AG04449 (cell line): ENCODE measurements at regions of chr7 and their contacts with region 1.

Region 1: DNA sequence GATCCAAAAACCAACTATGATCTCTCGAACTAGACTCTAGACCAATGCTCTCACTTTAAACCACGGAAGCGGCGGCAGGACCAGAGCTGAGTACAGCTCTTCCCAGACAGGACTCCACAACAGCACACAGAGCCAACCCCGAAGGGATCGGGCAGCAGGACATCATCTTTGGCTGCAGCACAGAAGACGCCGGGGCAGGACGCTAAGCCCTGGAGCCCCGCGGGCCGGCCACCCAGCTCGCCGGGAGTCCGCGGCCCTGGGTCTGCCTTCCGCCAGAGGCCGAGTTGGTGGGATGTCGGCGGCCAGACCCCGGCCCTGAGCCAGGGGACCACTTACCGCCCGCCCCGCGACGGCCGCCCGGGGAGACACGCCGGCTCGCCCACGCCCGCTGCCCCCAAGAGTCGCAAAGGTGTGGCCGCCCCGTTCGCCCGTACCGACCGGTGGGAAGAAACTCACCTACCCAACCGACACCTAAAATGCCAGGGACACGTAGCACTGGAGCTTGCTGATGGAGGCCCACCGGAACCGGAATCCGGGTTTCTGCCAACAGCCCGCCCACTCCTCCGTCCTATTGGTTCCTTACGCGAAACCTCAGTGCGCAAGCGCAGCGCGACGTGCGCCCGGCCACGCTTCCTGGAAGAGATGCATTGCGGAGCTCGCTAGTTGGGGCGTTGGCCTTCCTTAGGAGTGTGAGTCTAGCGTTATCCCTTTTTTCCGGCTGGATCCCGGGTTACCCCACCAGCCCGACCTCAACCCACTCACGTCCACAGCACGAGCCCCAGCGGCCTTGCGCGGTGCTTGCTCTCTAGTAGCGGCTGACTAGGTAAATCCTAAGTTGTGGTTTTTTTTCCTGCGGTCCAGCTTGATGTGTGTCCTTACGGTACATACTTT is at the start of gene SEC61G:
- DNase-seq: peak; percentile 87
- H3K4me3 ChIP-seq: peak within 1 kb of the TSS; percentile 86
- CTCF ChIP-seq: no peak

Region 2: DNA sequence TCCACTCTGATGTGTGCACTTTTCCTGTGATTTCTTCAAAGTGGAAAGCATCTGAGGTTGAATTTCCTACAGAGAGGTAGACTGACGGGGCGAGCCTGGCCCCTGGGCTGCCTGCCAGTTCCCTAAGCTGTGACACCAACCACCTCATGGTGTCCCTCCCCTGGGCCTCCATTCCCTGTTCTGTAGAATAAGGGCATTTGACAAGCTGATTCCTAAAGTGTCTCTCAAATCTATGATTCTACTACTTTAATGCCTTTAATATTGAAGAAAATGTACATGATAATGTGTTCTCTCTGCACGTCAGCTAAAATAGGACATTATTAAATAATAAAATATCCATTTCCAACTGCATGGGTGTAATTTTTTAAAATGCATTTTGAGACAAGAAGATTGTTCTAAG is 105.0 kb before region 1 on chr7:
- CTCF ChIA-PET with region 1: no interaction called
- POLR2A ChIA-PET with region 1: no interaction called
- DNase-seq: no peak
- H3K4me3 ChIP-seq: no peak overlapping the region
- CTCF ChIP-seq: no peak

Region 3: GRCh38 chr7:54747234-54747633 is 11.7 kb before region 1 on chr7:
- CTCF ChIA-PET with region 1: no interaction called
- POLR2A ChIA-PET with region 1: interaction called, 10 read pairs
- DNase-seq: no peak
- H3K4me3 ChIP-seq: no peak overlapping the region
- CTCF ChIP-seq: no peak

Region 4: DNA sequence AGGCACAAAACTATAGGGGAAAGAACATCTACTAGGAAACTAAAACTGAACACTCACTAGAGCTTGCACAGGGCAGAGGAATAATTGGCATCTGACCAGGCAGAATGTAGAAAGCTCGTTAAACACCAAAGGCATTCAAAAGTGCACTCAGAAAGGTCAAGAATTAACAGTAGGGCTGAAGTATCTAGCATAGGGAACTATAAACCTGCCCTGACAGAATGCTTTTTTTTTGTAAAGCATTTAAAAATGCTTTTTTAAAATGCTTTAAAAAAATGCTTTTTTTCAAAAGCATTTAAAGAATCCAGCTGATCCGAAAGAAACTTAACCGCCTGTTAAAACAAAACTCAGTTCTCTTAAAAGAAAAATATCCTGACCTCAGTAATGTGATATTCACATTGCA is 185.2 kb after region 1 on chr7:
- CTCF ChIA-PET with region 1: no interaction called
- POLR2A ChIA-PET with region 1: no interaction called
- DNase-seq: no peak
- H3K4me3 ChIP-seq: no peak overlapping the region
- CTCF ChIP-seq: no peak

Region 5: DNA sequence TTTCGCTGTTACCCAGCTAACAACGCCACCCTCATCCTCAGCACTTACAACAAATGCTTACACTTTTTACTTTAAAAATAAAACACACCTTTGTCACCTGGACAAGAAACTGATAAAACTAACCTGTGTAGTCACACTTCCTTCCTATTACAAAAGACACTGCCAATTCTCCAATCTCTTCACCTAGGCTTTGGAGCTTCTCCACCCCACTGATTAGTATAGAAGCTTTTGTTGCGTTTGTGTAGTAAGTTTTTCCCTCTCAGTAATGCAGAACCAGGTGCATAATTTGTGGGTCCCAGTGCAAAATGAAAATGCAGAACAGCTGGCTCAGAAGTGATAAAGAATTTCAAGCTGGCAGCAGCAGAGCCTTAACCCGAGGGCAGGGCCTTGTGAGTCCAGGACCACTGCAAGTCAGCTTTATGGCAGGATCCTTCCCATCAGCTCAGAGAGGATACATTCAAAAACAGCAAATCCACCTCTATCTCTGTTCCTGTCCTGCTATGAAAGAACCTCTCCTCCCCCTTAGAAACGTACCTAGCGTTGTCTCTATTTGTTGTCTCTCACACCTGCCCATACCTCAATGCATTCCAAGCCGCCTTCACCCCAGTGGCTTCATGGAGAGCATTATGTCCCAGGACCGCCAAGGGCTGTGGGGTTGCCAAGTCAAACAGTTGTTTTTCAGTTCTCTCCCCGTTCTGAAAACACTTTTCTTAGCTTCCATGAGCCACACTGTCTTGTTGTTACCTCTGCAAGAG is 219.6 kb after region 1 on chr7:
- CTCF ChIA-PET with region 1: no interaction called
- POLR2A ChIA-PET with region 1: no interaction called
- DNase-seq: no peak
- H3K4me3 ChIP-seq: no peak overlapping the region
- CTCF ChIP-seq: no peak

Region 6: GRCh38 chr7:55271069-55271626 is 512.2 kb after region 1 on chr7:
- CTCF ChIA-PET with region 1: interaction called, 17 read pairs
- POLR2A ChIA-PET with region 1: no interaction called
- DNase-seq: no peak
- H3K4me3 ChIP-seq: no peak overlapping the region
- CTCF ChIP-seq: peak; percentile 56